Posterior cingulate gyrus (tissue), 11 donors: ENCODE measurements at regions of chr12 and their contacts with region 1.

Region 1: DNA sequence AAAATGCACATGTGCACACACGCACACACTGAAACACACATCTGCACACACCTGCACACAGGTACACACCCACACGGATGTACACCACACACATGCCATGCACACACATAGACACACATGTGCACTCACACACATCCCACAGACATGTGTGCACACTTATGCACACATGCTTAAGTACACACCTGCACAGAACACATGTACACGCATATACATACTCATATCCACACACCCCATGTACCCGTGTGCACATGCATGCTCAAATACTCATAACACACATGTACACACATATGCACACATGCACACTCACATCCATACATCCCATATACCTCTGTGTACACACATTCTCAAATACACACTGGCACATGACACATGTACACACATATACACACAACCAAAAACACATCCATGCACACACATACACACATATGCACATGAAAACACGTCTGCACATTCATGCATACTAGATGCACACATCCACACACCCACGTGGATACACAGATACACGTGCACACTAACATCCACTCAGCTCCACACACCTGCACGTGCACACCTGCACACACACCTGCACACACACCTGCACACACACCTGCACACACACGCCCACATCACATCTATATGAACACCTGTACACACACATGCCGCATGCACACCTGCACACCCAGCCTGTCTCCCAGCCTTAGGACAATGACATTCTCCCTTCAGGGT is 336.7 kb downstream of the ADGRD1 start:
- DNase-seq: no peak

Region 2: DNA sequence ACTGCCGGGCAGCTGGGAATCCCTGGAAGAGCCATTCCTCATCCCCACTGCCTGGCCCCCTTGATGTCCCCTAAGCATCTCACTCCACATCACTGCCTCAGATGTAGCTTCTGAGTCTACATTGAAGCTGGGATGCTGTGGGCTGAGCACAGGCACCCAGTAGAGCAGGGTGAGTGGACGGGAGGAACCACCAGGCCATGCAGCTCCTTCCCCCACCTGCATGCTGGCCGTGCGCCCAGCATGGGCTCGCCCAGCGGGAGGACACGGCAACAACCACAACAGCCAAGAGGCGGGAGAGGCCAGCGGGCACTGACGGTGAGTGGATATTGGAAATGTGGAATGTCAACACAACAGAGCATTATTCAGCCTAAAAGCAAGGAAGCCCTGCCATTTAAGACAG is 25.8 kb before region 1 on chr12:
- intact Hi-C with region 1: no loop called
- DNase-seq: peak in 1 of 10 donors; percentile 20

Region 3: GRCh38 chr12:131353821-131354220 is 63.4 kb after region 1 on chr12:
- intact Hi-C with region 1: no loop called
- DNase-seq: no peak

Region 4: DNA sequence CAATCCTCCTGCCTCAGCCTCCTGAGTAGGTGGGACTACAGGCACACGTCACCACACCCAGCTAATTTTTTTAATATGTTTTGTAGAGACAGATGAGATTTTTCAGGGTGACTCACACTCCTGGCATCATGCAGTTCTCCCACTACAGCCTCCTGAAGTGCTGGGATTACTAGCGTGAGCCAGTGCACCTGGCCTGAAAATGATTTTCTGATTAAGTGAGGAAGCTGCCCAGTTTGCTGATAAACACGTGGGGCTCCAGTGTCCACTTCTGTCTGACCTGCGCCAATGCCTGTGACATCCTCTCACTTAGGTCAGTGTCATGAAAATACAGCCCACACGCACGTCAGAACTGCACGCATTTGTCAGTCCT is 383.5 kb after region 1 on chr12:
- intact Hi-C with region 1: loop called (anchors 10 kb)
- DNase-seq: no peak

Region 5: GRCh38 chr12:131764738-131765137 is 474.3 kb after region 1 on chr12:
- intact Hi-C with region 1: no loop called
- DNase-seq: peak in 2 of 10 donors; percentile 62 to 84